ENCODE measurements at regions of chr3 and their contacts with region 1.

Region 1: DNA sequence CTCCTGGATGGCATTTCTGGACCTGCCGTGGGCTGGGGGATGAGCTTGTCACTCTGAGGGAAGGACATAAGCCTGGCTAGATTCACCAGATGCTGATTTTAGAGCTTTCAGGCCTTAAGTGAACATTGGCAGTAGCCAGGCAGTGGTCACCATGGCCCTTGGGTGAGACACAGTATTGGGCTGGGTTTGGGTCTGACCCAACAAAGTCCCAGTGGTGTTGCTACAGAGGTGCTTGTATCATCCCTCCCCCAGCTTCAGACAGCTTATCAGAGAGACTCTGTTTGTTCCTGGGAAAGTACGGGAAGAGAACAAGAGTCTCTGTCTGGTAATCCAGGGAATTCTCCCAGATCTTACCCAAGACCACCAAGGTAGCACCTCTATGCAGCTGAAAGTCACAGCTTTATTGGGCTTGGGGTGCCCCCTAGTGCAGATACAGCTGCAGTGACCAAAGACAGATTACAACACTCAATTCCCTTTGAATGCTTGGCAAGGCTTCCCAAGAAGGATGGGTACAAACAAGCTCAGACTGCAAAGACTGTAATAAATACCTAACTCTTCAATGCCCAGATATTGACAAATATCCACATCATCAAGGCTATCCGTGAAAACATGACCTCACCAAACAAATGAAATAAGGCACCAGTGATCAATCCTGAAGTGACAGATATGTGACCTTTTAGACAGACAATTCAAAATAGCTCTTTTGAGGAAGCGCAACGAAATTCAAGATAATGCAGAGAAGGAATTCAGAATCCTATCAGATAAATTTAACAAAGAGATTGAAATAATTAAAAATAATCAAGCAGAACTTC is 9.9 kb upstream of the RUVBL1 start:
- DNase-seq: peak; percentile 47
- ATAC-seq: peak; percentile 86
- H3K4me3 ChIP-seq: no peak overlapping the region
- H3K27ac ChIP-seq: no peak overlapping the region
- H3K4me1 ChIP-seq: peaks cover 10% of the 10 kb centered on the region
- H3K27me3 ChIP-seq: no peaks in the 10 kb centered on the region
- CTCF ChIP-seq: peak; percentile 92
- EP300 ChIP-seq: no peak
- POLR2A ChIP-seq: no peak
- RAD21 ChIP-seq: peak; percentile 86

Region 2: DNA sequence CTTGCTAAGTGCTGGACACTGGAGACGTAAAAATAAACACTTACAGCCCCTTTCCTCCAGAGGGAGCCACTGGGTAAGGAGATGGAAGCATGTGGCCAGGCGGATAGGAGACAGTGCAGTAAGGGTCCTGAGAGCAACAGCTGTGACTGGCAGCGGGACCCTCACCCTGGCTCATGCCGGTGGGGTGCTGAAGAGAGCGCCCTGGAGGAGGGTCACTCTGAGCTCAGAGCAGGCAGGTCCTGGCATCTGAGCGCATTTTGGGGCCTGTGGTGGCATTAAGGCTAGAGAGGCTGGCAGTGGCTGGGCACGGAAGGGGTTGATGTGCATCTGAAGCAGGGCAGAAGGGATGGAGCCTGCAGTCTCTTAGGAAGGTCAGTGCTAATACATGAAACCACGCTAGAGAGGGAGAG is 65.3 kb before region 1 on chr3:
- CTCF ChIA-PET with region 1: interaction called, 4 read pairs
- POLR2A ChIA-PET with region 1: no interaction called
- in situ Hi-C with region 1: no loop called
- intact Hi-C with region 1: loop called (anchors 2 kb)
- DNase-seq: peak; percentile 57
- ATAC-seq: peak; percentile 41
- H3K4me3 ChIP-seq: no peak overlapping the region
- H3K27ac ChIP-seq: no peak overlapping the region
- H3K4me1 ChIP-seq: no peaks in the 10 kb centered on the region
- H3K27me3 ChIP-seq: no peaks in the 10 kb centered on the region
- CTCF ChIP-seq: peak; percentile 61
- EP300 ChIP-seq: no peak
- POLR2A ChIP-seq: no peak; a peak in 1 of 4 replicates
- RAD21 ChIP-seq: no peak

Region 3: DNA sequence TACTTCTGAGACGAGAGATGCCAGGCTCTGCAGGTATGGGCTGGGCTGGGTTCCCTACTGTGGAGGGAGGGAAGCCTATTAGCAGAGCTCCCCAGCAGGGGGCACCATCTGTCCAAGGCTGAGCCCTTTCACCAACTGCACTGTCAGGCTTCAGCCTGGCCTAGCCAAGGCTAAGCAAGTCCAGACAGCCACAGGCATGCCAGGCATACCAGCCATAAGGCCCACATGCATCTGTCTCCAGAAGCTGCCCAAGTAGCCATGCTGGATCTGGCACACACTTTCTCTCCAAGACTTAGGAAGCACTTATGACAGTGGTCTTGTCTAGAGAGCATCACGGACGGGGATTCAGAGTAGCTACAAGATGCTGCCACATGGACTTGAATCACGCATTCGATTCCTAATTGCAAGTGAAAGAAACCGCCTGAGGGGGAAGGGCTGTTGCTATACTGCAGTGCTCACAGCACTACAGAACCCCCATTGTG is 38.2 kb before region 1 on chr3:
- CTCF ChIA-PET with region 1: interaction called, 24 read pairs
- POLR2A ChIA-PET with region 1: interaction called, 8 read pairs
- in situ Hi-C with region 1: no loop called
- intact Hi-C with region 1: loop called (anchors 1 kb)
- DNase-seq: peak; percentile 68
- ATAC-seq: peak; percentile 96
- H3K4me3 ChIP-seq: no peak overlapping the region
- H3K27ac ChIP-seq: no peak overlapping the region
- H3K4me1 ChIP-seq: peaks cover 59% of the 10 kb centered on the region
- H3K27me3 ChIP-seq: no peaks in the 10 kb centered on the region
- CTCF ChIP-seq: peak; percentile 97
- EP300 ChIP-seq: no peak
- POLR2A ChIP-seq: no peak
- RAD21 ChIP-seq: peak; percentile 94

Region 4: GRCh38 chr3:128145337-128145736 is 11.9 kb after region 1 on chr3:
- CTCF ChIA-PET with region 1: no interaction called
- POLR2A ChIA-PET with region 1: no interaction called
- in situ Hi-C with region 1: no loop called
- intact Hi-C with region 1: no loop called
- DNase-seq: no peak
- ATAC-seq: no peak
- H3K4me3 ChIP-seq: no peak overlapping the region
- H3K27ac ChIP-seq: no peak overlapping the region
- H3K4me1 ChIP-seq: peaks cover 7% of the 10 kb centered on the region
- H3K27me3 ChIP-seq: no peaks in the 10 kb centered on the region
- CTCF ChIP-seq: no peak
- EP300 ChIP-seq: no peak
- POLR2A ChIP-seq: no peak
- RAD21 ChIP-seq: no peak

Region 5: DNA sequence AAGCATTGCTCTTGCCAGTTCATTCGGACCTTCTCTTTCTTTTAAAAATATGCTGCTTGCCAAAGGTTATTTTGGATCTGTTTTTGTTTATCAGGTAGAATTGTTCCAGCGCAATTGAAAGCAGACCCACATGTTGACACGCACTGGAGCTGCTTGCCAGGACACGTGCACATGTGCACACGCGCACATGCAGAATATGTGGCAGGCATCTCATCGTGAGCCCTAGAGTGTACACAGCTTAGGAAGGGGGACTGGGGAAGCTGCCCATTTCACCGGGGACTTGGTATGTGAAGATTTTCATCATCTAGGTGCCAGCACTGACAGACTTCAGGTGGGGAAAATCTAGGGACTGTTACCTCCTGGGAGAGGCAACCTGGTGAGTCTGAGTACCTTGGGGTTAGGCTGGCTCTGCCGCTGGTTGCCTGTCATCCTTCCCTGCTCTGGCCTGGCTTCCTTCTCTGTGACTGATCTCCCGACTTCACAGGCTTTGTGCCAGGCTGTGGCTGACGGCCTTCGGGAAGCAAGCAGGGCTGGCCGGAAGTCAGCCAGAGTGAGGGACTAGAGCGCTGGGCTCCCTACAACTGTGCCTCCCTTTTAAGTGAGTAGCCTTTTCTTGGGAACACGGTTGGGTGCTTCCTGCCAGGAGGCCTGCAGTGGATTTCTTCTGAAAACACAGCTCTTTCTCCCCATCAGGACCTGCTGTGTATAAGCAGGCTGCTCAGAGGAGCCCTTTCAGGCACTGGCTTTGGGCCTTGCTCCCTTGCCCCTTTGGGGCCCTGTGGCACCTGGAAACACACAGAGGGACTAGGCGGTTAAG is 149.1 kb after region 1 on chr3:
- CTCF ChIA-PET with region 1: no interaction called
- POLR2A ChIA-PET with region 1: no interaction called
- in situ Hi-C with region 1: no loop called
- intact Hi-C with region 1: no loop called
- DNase-seq: no peak
- ATAC-seq: no peak
- H3K4me3 ChIP-seq: no peak overlapping the region
- H3K27ac ChIP-seq: no peak overlapping the region
- H3K4me1 ChIP-seq: peaks cover 8% of the 10 kb centered on the region; the same call in 1 of the 2 replicates
- H3K27me3 ChIP-seq: no peaks in the 10 kb centered on the region
- CTCF ChIP-seq: no peak
- EP300 ChIP-seq: no peak
- POLR2A ChIP-seq: no peak
- RAD21 ChIP-seq: no peak

Measured in HepG2 (cell line).